ENCODE measurements at regions of chr19 and their contacts with region 1.

Region 1: DNA sequence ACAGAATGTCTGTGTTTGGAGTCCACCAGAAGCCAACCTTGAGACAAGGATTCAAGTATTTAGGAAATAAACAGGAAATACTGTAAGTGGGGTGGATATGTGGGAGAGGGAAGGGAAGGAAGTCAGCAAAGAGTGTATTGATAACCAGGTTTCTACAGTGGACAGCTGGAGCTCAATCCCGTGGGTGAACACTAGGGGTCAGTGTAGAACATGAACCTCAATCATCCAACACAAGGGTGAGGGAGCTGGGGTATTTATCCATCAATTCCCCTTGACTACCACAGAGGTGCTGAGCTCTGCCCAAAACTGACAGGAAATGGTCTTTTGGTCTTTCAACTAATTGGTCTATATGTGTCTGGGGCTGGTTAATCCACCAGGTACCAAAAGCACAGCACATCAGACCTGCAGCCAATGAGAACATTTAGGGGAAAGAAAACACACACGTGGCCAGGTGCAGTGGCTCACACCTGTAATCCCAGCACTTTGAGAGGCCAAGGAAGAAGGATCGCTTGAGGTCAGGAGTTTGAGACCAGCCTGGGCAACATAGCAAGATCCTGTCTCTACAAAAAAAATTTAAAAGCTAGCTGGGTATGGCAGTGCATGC is 5.6 kb upstream of the SYDE1 start:
- DNase-seq: peak; percentile 75
- H3K4me3 ChIP-seq: no peak overlapping the region
- H3K27ac ChIP-seq: no peak overlapping the region
- H3K4me1 ChIP-seq: peaks cover 3% of the 10 kb centered on the region
- H3K27me3 ChIP-seq: no peaks in the 10 kb centered on the region
- CTCF ChIP-seq: peak; percentile 79 to 85
- POLR2A ChIP-seq: no peak

Region 2: GRCh38 chr19:15022752-15023151 is 78.8 kb before region 1 on chr19:
- CTCF ChIA-PET with region 1: no interaction called
- POLR2A ChIA-PET with region 1: no interaction called
- dilution Hi-C with region 1: no loop called
- intact Hi-C with region 1: no loop called
- DNase-seq: no peak
- H3K4me3 ChIP-seq: no peak overlapping the region
- H3K27ac ChIP-seq: no peak overlapping the region
- H3K4me1 ChIP-seq: no peaks in the 10 kb centered on the region
- H3K27me3 ChIP-seq: no peaks in the 10 kb centered on the region
- CTCF ChIP-seq: no peak
- POLR2A ChIP-seq: no peak

Region 3: DNA sequence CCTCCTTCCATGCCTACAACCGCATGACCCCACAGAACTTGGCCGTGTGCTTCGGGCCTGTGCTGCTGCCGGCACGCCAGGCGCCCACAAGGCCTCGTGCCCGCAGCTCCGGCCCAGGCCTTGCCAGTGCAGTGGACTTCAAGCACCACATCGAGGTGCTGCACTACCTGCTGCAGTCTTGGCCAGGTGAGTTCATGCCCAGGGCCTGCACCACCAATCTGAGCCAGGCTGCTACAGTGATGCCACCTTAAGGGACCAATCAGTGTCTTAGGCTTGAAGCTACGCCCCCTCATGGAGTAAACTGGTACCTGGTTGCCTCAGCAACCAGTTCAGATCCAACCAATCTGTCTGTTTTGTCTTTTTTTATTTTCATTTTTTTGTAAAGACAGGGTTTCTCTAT is 10.8 kb after region 1 on chr19:
- CTCF ChIA-PET with region 1: interaction called, 24 read pairs
- POLR2A ChIA-PET with region 1: no interaction called
- dilution Hi-C with region 1: no loop called
- intact Hi-C with region 1: no loop called
- DNase-seq: no peak
- H3K4me3 ChIP-seq: no peak overlapping the region
- H3K27ac ChIP-seq: no peak overlapping the region
- H3K4me1 ChIP-seq: peaks cover 8% of the 10 kb centered on the region
- H3K27me3 ChIP-seq: no peaks in the 10 kb centered on the region
- CTCF ChIP-seq: no peak
- POLR2A ChIP-seq: no peak

Region 4: DNA sequence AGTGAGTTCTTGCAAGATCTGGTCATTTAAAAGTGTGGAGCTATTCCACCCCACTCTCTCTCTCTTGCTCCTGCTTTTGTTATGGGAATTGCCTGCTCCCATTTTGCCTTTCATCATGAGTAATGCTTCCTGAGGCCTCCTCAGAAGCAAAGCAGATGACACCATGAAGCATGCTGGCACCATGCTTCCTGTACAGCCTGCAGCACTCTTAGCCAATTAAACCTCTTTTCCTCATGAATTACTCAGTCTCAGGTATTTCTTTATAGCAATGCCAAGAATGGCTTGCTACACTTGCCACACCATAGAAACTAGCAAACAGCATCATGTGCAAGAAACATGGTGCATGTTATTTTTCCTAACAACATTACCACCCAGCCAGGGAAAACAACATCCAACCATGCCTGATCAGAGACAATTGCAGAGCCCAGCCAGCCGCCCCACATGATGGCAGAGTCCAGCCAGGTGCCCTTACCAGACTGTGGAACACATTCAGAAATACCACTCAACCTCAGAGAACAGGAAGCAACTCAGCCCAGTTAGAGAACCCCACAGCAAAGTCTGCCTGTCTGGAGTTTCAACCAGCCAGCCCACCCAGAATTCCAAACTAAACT is 42.6 kb after region 1 on chr19:
- CTCF ChIA-PET with region 1: interaction called, 176 read pairs
- POLR2A ChIA-PET with region 1: no interaction called
- dilution Hi-C with region 1: no loop called
- intact Hi-C with region 1: no loop called
- DNase-seq: no peak
- H3K4me3 ChIP-seq: no peak overlapping the region
- H3K27ac ChIP-seq: no peak overlapping the region
- H3K4me1 ChIP-seq: no peaks in the 10 kb centered on the region
- H3K27me3 ChIP-seq: peaks cover 0 to 5% of the 10 kb centered on the region in 2 experiments
- CTCF ChIP-seq: no peak
- POLR2A ChIP-seq: no peak

Region 5: DNA sequence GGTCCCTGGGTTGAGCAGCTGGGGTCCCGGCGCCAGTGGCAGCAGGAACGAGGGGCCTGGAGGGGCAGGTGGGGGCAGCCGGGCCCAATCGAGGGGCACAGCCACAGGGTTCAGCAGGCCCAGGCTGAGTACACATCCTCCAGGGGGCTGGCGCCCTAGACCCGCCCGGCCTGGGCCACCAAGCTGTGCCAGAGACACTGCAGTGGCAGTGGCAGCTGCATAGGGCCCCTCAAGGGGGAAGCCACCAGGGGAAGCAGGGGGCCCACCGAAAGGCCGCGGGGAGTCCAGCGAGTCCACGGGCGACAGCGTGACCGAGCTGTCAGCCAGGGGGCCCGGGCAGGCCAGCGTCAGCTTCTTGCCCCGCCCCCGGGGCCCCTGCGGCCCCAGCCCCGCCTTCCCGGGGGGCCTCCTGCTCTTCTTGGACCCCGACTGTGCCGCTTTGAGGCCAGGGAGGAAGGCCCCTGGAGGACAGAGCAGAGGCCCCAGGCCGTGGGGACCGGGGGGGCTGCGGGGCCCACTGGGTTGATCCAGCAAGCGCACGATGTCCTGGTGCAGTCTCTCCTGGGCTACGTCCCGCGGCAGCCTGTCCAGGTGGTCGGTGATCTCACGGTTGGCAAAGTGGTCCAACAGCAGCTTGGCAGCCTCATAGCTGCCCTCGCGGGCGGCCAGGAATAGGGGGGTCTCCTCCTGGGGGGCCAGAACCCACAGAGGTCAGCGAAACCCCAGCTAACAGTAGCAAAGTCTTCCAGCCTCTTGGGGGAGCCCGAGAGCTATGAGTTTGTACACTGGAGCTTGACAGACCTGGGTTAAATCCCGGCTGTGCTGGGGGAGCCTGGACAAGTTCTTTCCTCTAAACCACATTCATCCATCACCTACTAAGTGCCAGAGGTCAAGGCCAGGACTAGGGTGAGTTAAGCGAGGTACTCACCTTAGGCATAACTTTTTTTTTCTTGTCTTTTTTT is 59.7 kb after region 1 on chr19:
- CTCF ChIA-PET with region 1: interaction called, 11 read pairs
- POLR2A ChIA-PET with region 1: no interaction called
- dilution Hi-C with region 1: no loop called
- intact Hi-C with region 1: no loop called
- DNase-seq: no peak
- H3K4me3 ChIP-seq: no peak overlapping the region
- H3K27ac ChIP-seq: no peak overlapping the region
- H3K4me1 ChIP-seq: no peaks in the 10 kb centered on the region
- H3K27me3 ChIP-seq: no peaks in the 10 kb centered on the region
- CTCF ChIP-seq: peak; percentile 20 to 45
- POLR2A ChIP-seq: no peak

Region 6: GRCh38 chr19:15251749-15252397 is 150.3 kb after region 1 on chr19:
- CTCF ChIA-PET with region 1: interaction called, 15 read pairs
- POLR2A ChIA-PET with region 1: no interaction called
- dilution Hi-C with region 1: no loop called
- intact Hi-C with region 1: loop called (anchors 10 kb)
- DNase-seq: peak; percentile 73
- H3K4me3 ChIP-seq: no peak overlapping the region
- H3K27ac ChIP-seq: peak overlapping the region; percentile 69
- H3K4me1 ChIP-seq: peaks cover 42% of the 10 kb centered on the region
- H3K27me3 ChIP-seq: no peaks in the 10 kb centered on the region
- CTCF ChIP-seq: peak; percentile 56 to 60
- POLR2A ChIP-seq: no peak